Activated T-helper 1 cell treated with anti-CD3 and anti-CD28 coated beads, Interleukin-12 subunit alpha, Interleukin-12 subunit beta, Interleukin-2, Interleukin-4 antibody, amounts not matched to agents 30 ng/mL and 10 ng/mL and 1 ng/mL, durations not matched to agents 14 hours and 24 hours and 36 hours (primary cell): ENCODE measurements at regions of chr3 and their contacts with region 1.

Region 1: GRCh38 chr3:187802928-187803259 is 57.6 kb upstream of the BCL6 start:
- DNase-seq: peak; percentile 78
- H3K4me3 Mint-ChIP-seq: peak overlapping the region; percentile 65
- H3K27ac Mint-ChIP-seq: peak overlapping the region; percentile 90
- H3K4me1 Mint-ChIP-seq: peaks cover 96% of the 10 kb centered on the region
- H3K27me3 Mint-ChIP-seq: no peaks in the 10 kb centered on the region

Region 2: DNA sequence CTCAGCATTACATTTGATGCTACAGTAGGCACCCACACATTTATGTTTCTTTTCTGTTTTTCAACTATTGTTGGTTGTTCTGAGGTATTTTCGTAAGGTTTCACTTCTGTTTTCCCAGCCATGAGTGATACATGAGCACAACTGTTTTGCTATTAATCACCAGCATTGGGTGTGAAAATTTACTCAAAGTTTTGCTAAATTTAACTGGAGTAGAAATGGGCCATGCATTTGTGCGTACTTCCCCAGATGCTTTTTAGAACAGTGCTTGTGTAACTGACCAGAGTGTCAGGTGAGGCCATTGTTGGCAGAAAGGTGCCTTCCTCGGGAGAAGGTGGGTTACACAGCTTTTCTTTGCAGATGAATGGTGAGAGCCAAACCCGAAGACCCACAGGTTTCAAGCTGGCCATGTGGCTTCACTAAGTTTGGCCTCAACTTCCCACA is 802.2 kb before region 1 on chr3:
- intact Hi-C with region 1: loop called (anchors 10 kb)
- DNase-seq: peak; percentile 29
- H3K4me3 Mint-ChIP-seq: peak overlapping the region; percentile 30
- H3K27ac Mint-ChIP-seq: peak overlapping the region; percentile 90
- H3K4me1 Mint-ChIP-seq: peaks cover 86% of the 10 kb centered on the region
- H3K27me3 Mint-ChIP-seq: no peaks in the 10 kb centered on the region

Region 3: GRCh38 chr3:187783098-187783497 is 19.8 kb before region 1 on chr3:
- intact Hi-C with region 1: loop called (anchors 1 kb)
- DNase-seq: no peak
- H3K4me3 Mint-ChIP-seq: peak overlapping the region; percentile 4
- H3K27ac Mint-ChIP-seq: peak overlapping the region; percentile 56
- H3K4me1 Mint-ChIP-seq: peaks cover 44% of the 10 kb centered on the region
- H3K27me3 Mint-ChIP-seq: no peaks in the 10 kb centered on the region

Region 4: GRCh38 chr3:187822402-187822801 is 19.5 kb after region 1 on chr3:
- intact Hi-C with region 1: no loop called
- DNase-seq: no peak
- H3K4me3 Mint-ChIP-seq: no peak overlapping the region
- H3K27ac Mint-ChIP-seq: peak overlapping the region; percentile 89
- H3K4me1 Mint-ChIP-seq: peaks cover 36% of the 10 kb centered on the region
- H3K27me3 Mint-ChIP-seq: no peaks in the 10 kb centered on the region

Region 5: GRCh38 chr3:187974871-187975271 is 172.0 kb after region 1 on chr3:
- intact Hi-C with region 1: loop called (anchors 1 kb)
- DNase-seq: no peak
- H3K4me3 Mint-ChIP-seq: peak overlapping the region; percentile 59
- H3K27ac Mint-ChIP-seq: peak overlapping the region; percentile 94
- H3K4me1 Mint-ChIP-seq: peaks cover 62% of the 10 kb centered on the region
- H3K27me3 Mint-ChIP-seq: peaks cover 2% of the 10 kb centered on the region

Region 6: DNA sequence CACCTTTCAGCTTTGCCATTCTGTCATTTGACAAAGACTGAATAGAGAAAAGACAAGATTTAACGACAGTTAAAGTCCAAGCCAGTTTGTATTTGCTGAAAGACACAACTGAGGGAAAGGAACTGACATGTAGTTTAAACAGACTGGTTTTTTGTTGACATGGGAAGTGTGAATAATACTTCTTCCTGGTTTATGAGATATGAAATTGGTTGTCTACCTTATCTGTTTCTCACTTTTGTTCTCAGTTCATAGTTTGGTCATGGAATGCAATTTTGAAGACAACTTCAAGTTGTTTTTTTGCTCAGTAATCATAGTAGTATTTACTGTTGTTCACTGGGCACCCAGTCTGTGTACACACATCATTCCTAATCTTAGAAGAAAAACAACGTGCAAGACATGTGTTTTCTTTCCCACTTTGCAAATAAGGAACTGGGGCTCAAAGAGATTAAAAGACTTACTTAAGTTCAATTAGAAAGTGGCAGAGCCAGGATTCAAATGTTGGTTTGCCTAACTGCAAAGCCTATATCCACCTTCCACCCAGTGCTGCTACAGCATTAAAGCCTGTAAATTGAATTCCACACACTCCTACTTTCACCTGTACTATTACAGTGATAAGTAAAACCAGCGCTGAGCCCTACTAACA is 454.6 kb after region 1 on chr3:
- intact Hi-C with region 1: loop called (anchors 2 kb)
- DNase-seq: no peak
- H3K4me3 Mint-ChIP-seq: no peak overlapping the region
- H3K27ac Mint-ChIP-seq: peak overlapping the region; percentile 63
- H3K4me1 Mint-ChIP-seq: peaks cover 62% of the 10 kb centered on the region
- H3K27me3 Mint-ChIP-seq: peaks cover 2% of the 10 kb centered on the region

Region 7: DNA sequence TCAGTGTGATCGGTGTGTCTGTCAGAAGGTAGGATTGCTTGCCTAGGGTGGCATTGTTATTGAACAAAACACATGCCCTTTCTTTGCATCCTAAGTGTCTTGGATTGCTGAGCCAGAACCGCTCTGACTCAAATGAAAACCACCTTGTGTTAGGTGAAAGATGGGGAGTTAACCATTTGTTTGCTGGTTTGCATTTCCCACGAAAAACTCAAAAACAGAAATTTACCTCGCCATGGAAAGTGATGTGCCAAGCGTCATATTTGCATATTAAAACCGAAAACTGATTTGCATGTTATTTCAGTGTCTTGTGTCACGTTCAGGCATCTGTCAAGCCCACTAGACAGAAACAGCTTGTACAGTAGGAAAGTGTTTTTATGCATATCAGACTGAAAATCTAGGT is 894.2 kb after region 1 on chr3:
- intact Hi-C with region 1: loop called (anchors 1 kb)
- DNase-seq: no peak
- H3K4me3 Mint-ChIP-seq: no peak overlapping the region
- H3K27ac Mint-ChIP-seq: peak overlapping the region; percentile 18
- H3K4me1 Mint-ChIP-seq: peaks cover 36% of the 10 kb centered on the region
- H3K27me3 Mint-ChIP-seq: peaks cover 5% of the 10 kb centered on the region

Region 8: DNA sequence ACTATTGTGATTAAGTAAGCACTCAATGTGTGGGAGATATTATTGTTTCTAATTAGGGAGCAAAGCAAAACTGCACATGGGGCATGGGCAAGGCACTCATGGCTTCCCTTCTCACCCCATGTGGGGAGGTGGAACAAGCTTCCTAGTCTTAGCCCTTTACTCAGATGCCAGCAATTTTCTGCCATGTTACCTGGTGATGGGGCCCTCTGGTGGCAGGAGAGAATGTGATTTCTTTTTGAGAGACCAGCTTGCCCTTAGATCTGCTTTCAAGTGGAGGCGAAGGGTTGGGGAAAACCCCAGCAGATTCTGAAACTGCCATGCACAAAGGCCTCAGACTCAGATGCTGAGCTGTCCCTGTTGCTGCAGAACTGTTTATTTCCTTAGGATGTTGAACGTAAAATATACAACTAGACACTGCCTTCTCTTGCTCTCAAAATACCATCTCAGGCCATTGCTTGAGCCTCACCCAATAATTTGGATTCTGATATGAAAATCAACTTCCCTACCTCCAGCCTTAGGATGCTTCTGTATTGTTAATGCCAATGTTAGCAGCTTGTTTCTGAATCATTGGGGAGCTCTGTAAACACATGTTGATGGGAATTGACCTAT is 1238.7 kb after region 1 on chr3:
- intact Hi-C with region 1: loop called (anchors 5 kb)
- DNase-seq: peak; percentile 75
- H3K4me3 Mint-ChIP-seq: no peak overlapping the region
- H3K27ac Mint-ChIP-seq: no peak overlapping the region
- H3K4me1 Mint-ChIP-seq: peaks cover 56% of the 10 kb centered on the region
- H3K27me3 Mint-ChIP-seq: peaks cover 4% of the 10 kb centered on the region